ENCODE measurements at regions of chrX and their contacts with region 1.

Region 1: GRCh38 chrX:1453951-1454785 is 1.5 kb upstream of the ASMTL start:
- DNase-seq: peak; percentile 87 to 97 (median 92)
- ATAC-seq: peak; percentile 33
- H3K4me3 ChIP-seq: peak overlapping the region; percentile 33 to 40
- H3K4me3 Mint-ChIP-seq: peak overlapping the region; percentile 74
- H3K27ac ChIP-seq: peak overlapping the region; percentile 41 to 96
- H3K27ac Mint-ChIP-seq: peak overlapping the region; percentile 82
- H3K4me1 ChIP-seq: peaks cover 41% of the 10 kb centered on the region
- H3K4me1 Mint-ChIP-seq: peaks cover 22% of the 10 kb centered on the region
- H3K27me3 ChIP-seq: no peaks in the 10 kb centered on the region
- H3K27me3 Mint-ChIP-seq: no peaks in the 10 kb centered on the region
- CTCF ChIP-seq: peak; percentile 98

Region 2: DNA sequence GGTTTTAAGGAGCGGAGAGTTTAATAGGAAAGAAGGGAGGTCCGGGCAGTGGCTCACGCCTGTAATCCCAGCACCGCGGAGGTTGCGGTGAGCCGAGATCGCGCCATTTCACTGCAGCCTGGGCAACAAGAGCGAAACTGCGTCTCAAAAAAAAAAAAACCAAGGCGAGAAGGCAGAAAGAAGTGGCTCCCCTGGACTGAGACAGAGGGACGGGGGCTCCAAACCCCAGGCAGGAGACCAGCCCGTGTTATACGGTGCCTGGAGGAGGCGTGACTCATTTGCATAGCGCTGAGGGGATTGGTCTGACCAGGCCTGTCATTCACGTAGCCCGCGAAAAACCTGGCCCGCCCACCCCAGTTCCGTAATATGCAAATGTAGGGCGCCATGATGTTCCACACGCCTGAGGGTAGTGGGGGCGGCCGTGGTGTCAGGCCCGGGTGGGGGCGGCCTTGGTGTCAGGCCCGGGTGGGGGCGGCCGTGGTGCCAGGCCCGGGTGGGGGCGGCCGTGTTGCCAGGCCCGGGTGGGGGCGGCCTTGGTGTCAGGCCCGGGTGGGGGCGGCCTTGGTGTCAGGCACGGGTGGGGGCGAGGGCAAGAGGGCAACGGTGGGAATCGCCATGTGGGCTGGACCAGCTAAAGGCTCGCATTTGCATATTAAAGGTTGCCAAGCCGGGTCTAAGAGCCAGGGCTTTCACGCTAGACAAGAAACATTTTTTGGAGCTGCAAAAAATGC is 1170.9 kb before region 1 on chrX:
- CTCF ChIA-PET with region 1: no interaction called
- POLR2A ChIA-PET with region 1: no interaction called
- intact Hi-C with region 1: loop called in 1 of 2 experiments (anchors 5 kb)
- DNase-seq: peak; percentile 78 to 94 (median 89)
- ATAC-seq: peak; percentile 99
- H3K4me3 ChIP-seq: peak overlapping the region; percentile 64 to 73
- H3K4me3 Mint-ChIP-seq: peak overlapping the region; percentile 91
- H3K27ac ChIP-seq: peak overlapping the region; percentile 54 to 61
- H3K27ac Mint-ChIP-seq: peak overlapping the region; percentile 90
- H3K4me1 ChIP-seq: peaks cover 18% of the 10 kb centered on the region
- H3K4me1 Mint-ChIP-seq: peaks cover 27% of the 10 kb centered on the region
- H3K27me3 ChIP-seq: no peaks in the 10 kb centered on the region
- H3K27me3 Mint-ChIP-seq: no peaks in the 10 kb centered on the region
- CTCF ChIP-seq: no peak

Region 3: GRCh38 chrX:1468250-1468772 is 14.1 kb after region 1 on chrX:
- CTCF ChIA-PET with region 1: no interaction called
- POLR2A ChIA-PET with region 1: no interaction called
- intact Hi-C with region 1: loop called in 1 of 2 experiments (anchors 1 kb)
- DNase-seq: peak; percentile 56 to 92 (median 79)
- ATAC-seq: peak; percentile 25
- H3K4me3 ChIP-seq: peak overlapping the region in 1 of 2 experiments; percentile 33
- H3K4me3 Mint-ChIP-seq: peak overlapping the region; percentile 57
- H3K27ac ChIP-seq: peak overlapping the region; percentile 51 to 92
- H3K27ac Mint-ChIP-seq: peak overlapping the region; percentile 98
- H3K4me1 ChIP-seq: peaks cover 92% of the 10 kb centered on the region
- H3K4me1 Mint-ChIP-seq: peaks cover 81% of the 10 kb centered on the region
- H3K27me3 ChIP-seq: no peaks in the 10 kb centered on the region
- H3K27me3 Mint-ChIP-seq: no peaks in the 10 kb centered on the region
- CTCF ChIP-seq: no peak

Region 4: GRCh38 chrX:1537035-1537715 is 83.0 kb after region 1 on chrX and contains the start of gene P2RY8:
- CTCF ChIA-PET with region 1: no interaction called
- POLR2A ChIA-PET with region 1: no interaction called
- intact Hi-C with region 1: loop called (anchors 1 kb)
- DNase-seq: peak; percentile 65 to 91 (median 82)
- ATAC-seq: peak; percentile 76
- H3K4me3 ChIP-seq: peak within 1 kb of the TSS; percentile 71 to 98
- H3K4me3 Mint-ChIP-seq: peak within 1 kb of the TSS; percentile 98
- H3K27ac ChIP-seq: peak within 1 kb of the TSS; percentile 91 to 92
- H3K27ac Mint-ChIP-seq: peak within 1 kb of the TSS; percentile 98
- H3K4me1 ChIP-seq: peaks cover 15% of the 10 kb centered on the region
- H3K4me1 Mint-ChIP-seq: peaks cover 20% of the 10 kb centered on the region
- H3K27me3 ChIP-seq: no peaks in the 10 kb centered on the region
- H3K27me3 Mint-ChIP-seq: no peaks in the 10 kb centered on the region
- CTCF ChIP-seq: no peak
- total RNA-seq, gene P2RY8: 196 to 197 TPM

Region 5: GRCh38 chrX:1657367-1658070 is 203.4 kb after region 1 on chrX:
- CTCF ChIA-PET with region 1: no interaction called
- POLR2A ChIA-PET with region 1: no interaction called
- intact Hi-C with region 1: loop called in 1 of 2 experiments (anchors 1 kb)
- DNase-seq: peak; percentile 10 to 94 (median 63)
- ATAC-seq: peak; percentile 31
- H3K4me3 ChIP-seq: peak overlapping the region; percentile 46 to 69
- H3K4me3 Mint-ChIP-seq: peak overlapping the region; percentile 98
- H3K27ac ChIP-seq: peak overlapping the region; percentile 78 to 98
- H3K27ac Mint-ChIP-seq: peak overlapping the region; percentile 98
- H3K4me1 ChIP-seq: peaks cover 18% of the 10 kb centered on the region
- H3K4me1 Mint-ChIP-seq: peaks cover 39% of the 10 kb centered on the region
- H3K27me3 ChIP-seq: no peaks in the 10 kb centered on the region
- H3K27me3 Mint-ChIP-seq: no peaks in the 10 kb centered on the region
- CTCF ChIP-seq: no peak

Region 6: DNA sequence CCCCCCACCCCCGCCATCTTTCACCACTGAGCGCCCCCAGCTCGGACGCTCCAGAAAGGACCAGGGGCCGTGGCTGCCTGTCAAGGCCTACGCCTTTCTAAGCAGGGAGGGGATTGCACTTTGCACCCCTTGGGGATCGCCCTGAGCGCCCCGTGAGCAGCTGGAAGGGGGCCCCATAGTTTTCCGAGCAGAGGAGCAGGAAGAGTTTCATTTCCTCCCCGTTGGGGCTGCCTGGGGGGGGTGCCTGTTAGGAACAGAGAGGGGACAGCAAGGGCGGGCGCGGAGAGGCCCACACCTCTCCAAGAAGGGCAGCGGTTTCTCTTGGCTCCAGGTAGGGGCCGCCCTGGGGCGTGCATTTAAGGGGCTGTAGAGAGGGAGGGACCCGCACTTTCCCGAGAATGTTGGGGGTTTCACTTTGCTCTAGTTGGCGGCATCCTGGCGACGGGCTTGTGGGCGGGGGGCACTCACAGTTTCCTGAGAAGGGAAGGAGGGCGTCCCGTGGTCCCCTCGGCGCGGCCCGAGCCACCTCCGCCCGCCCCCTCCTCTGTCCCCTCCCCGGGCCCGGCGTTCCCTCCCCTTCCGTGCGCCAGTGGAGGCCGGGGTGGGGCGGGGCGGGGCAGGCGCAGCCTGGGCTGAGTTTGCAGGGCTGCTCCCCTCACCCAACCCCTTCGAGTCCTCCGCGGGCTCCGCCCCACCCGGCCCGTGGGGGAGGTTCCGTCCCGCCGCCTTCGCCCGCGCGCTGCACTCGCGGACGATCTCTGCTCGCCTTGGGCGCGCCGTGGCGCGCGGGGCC is 1154.7 kb after region 1 on chrX:
- CTCF ChIA-PET with region 1: no interaction called
- POLR2A ChIA-PET with region 1: no interaction called
- intact Hi-C with region 1: loop called (anchors 1 to 5 kb)
- DNase-seq: peak; percentile 66 to 92 (median 85)
- ATAC-seq: peak; percentile 95
- H3K4me3 ChIP-seq: peak overlapping the region; percentile 88 to 93
- H3K4me3 Mint-ChIP-seq: peak overlapping the region; percentile 93
- H3K27ac ChIP-seq: peak overlapping the region; percentile 54 to 59
- H3K27ac Mint-ChIP-seq: peak overlapping the region; percentile 83
- H3K4me1 ChIP-seq: peaks cover 18% of the 10 kb centered on the region
- H3K4me1 Mint-ChIP-seq: peaks cover 46% of the 10 kb centered on the region
- H3K27me3 ChIP-seq: no peaks in the 10 kb centered on the region
- H3K27me3 Mint-ChIP-seq: no peaks in the 10 kb centered on the region
- CTCF ChIP-seq: no peak

Measured in CD8-positive, alpha-beta T cell (primary cell).